PC-9 (cell line): ENCODE measurements at regions of chr1 and their contacts with region 1.

Region 1: DNA sequence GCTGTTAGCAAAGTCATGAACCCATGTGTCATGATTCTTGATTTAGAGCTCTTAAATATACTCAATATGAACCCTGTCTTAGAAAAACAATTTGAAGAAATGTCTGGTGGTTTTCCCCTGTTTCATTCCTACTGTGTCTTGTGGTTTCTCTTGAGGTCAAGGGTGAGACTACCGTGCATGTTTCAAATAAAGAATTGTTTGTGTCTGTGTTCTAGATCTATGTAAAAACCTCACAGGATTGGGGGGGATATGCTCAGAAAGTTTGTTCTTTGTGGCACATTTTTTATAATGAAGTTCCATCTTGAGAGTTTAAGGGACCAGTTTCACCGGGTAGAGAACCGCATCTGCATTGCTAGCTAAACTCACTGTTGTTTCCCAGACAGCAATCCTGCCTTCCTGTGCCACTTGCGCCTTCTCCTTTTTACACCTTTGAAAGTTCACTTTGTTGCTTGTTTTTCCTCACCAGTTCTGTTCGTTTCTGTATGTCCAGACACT is 30.9 kb upstream of the CACYBP start:
- DNase-seq: peak in 1 of 2 experiments; percentile 85
- H3K4me3 ChIP-seq: no peak overlapping the region
- H3K27ac ChIP-seq: peak overlapping the region; percentile 58
- H3K4me1 ChIP-seq: peaks cover 74% of the 10 kb centered on the region
- H3K27me3 ChIP-seq: no peaks in the 10 kb centered on the region
- CTCF ChIP-seq: no peak

Region 2: DNA sequence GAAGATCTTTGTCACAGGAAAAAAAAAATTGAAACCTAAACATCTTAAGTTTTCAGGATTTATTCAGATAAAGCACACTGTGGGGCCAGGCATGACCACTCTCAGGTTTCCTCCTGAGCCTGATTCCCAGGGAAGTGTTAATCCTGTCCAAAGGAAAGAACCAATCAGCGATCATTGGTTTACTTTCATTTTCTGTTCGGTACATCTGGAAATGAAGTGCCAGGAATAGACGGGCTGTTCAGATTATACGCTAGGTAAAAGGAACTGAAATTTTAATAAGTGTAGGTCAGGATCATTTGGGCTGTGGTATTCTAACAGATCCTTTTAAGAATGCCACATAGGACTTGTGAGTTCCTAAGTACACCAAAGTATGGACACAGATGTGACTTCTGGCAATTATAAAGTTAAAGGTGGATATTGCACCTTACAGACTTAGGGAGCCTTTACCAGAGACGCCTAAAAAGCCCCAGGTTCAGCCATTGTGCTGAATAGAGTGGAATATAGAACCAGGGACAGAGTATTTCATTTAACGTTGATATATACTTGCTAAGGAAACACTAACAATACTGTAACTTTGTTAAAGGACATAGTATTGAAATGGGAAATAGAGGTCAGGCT is 21.7 kb after region 1 on chr1:
- CTCF ChIA-PET with region 1: interaction called, 11 read pairs
- POLR2A ChIA-PET with region 1: no interaction called
- intact Hi-C with region 1: no loop called
- DNase-seq: no peak
- H3K4me3 ChIP-seq: peak overlapping the region; percentile 12; the same call in 1 of the 2 replicates
- H3K27ac ChIP-seq: no peak overlapping the region
- H3K4me1 ChIP-seq: no peaks in the 10 kb centered on the region
- H3K27me3 ChIP-seq: no peaks in the 10 kb centered on the region
- CTCF ChIP-seq: no peak

Region 3: DNA sequence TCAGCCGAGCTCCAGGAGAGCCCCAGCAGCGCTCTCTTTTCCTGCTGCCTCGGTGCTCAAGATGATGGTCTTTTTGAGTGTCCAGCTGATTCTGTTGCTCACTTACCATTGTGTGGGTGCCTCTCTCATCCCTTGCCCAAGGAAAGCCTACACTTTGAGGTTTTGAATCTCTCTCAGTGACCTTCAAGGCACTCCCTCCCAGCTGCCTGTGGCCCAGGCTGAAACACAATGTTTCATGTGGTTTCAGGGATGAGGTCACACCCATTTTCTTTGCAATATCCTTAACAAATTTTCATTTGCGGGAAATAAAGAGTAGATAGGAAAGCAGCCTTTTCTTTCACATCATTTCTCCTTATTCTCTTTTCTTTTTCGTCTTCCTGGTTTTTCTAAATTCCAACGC is 67.1 kb after region 1 on chr1:
- CTCF ChIA-PET with region 1: no interaction called
- POLR2A ChIA-PET with region 1: no interaction called
- intact Hi-C with region 1: no loop called
- DNase-seq: no peak
- H3K4me3 ChIP-seq: no peak overlapping the region
- H3K27ac ChIP-seq: no peak overlapping the region
- H3K4me1 ChIP-seq: peaks cover 31% of the 10 kb centered on the region
- H3K27me3 ChIP-seq: no peaks in the 10 kb centered on the region
- CTCF ChIP-seq: no peak

Region 4: DNA sequence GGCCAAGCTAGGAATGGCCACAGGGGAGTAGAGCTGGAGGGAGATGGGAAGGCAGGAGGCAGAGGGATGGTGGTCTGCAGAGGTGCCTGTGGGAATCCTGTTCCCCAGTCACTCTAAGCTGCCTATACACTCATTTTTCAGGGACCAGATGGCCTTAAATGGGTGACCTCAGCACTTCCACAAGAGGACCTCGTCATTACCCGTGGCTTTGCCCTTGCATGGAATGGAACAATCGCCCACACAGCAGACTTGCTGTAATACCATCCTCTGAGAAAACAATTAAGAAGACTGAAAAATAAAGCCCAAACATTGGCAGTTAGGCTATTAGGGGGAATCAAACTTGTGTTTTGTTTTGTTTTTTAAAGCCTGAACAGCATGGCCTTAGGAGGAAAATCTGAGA is 85.9 kb after region 1 on chr1:
- CTCF ChIA-PET with region 1: no interaction called
- POLR2A ChIA-PET with region 1: no interaction called
- intact Hi-C with region 1: no loop called
- DNase-seq: no peak
- H3K4me3 ChIP-seq: no peak overlapping the region
- H3K27ac ChIP-seq: no peak overlapping the region
- H3K4me1 ChIP-seq: no peaks in the 10 kb centered on the region
- H3K27me3 ChIP-seq: peaks cover 5% of the 10 kb centered on the region; the same call in 1 of the 2 replicates
- CTCF ChIP-seq: no peak

Region 5: GRCh38 chr1:175095978-175096607 is 127.3 kb after region 1 on chr1:
- CTCF ChIA-PET with region 1: no interaction called
- POLR2A ChIA-PET with region 1: no interaction called
- intact Hi-C with region 1: no loop called
- DNase-seq: no peak
- H3K4me3 ChIP-seq: no peak overlapping the region
- H3K27ac ChIP-seq: no peak overlapping the region
- H3K4me1 ChIP-seq: no peaks in the 10 kb centered on the region
- H3K27me3 ChIP-seq: no peaks in the 10 kb centered on the region; the same call in 1 of the 2 replicates
- CTCF ChIP-seq: no peak